ENCODE measurements at regions of chr4 and their contacts with region 1.

Region 1: GRCh38 chr4:122716825-122717448 is 15.6 kb upstream of the BBS12 start:
- DNase-seq: peak; percentile 59
- H3K4me3 Mint-ChIP-seq: no peak overlapping the region
- H3K27ac Mint-ChIP-seq: peak overlapping the region; percentile 40
- H3K4me1 Mint-ChIP-seq: peaks cover 46% of the 10 kb centered on the region
- H3K27me3 Mint-ChIP-seq: no peaks in the 10 kb centered on the region

Region 2: DNA sequence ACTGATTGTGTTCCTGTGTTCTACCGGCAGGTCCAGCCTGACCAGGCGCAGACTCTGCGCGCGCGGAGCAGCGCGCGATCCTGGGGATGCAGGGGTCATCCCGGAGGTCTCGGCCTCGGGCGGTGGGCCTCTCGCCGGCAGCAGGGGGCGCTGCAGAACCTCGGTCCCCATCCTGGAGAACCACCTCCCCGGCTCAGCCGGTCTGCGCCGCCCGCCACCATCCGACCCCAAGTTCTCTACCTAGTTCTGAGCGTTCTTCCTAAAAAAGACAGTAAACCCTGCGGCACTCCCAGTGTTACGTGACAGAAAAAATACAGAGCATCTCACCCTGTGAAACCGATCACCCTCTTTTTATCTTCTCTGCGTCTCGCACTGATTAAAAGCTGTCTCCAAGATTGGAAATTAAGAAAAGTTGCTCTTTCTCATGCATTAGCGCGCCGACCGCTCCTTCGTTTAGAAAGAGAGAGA is 766.7 kb before region 1 on chr4:
- intact Hi-C with region 1: loop called (anchors 10 kb)
- DNase-seq: peak; percentile 71
- H3K4me3 Mint-ChIP-seq: peak overlapping the region; percentile 82
- H3K27ac Mint-ChIP-seq: no peak overlapping the region
- H3K4me1 Mint-ChIP-seq: peaks cover 14% of the 10 kb centered on the region
- H3K27me3 Mint-ChIP-seq: peaks cover 63% of the 10 kb centered on the region

Region 3: GRCh38 chr4:122584519-122584918 is 132.4 kb before region 1 on chr4:
- intact Hi-C with region 1: loop called (anchors 1 kb)
- DNase-seq: no peak
- H3K4me3 Mint-ChIP-seq: peak overlapping the region; percentile 40
- H3K27ac Mint-ChIP-seq: peak overlapping the region; percentile 84
- H3K4me1 Mint-ChIP-seq: peaks cover 32% of the 10 kb centered on the region
- H3K27me3 Mint-ChIP-seq: no peaks in the 10 kb centered on the region

Region 4: DNA sequence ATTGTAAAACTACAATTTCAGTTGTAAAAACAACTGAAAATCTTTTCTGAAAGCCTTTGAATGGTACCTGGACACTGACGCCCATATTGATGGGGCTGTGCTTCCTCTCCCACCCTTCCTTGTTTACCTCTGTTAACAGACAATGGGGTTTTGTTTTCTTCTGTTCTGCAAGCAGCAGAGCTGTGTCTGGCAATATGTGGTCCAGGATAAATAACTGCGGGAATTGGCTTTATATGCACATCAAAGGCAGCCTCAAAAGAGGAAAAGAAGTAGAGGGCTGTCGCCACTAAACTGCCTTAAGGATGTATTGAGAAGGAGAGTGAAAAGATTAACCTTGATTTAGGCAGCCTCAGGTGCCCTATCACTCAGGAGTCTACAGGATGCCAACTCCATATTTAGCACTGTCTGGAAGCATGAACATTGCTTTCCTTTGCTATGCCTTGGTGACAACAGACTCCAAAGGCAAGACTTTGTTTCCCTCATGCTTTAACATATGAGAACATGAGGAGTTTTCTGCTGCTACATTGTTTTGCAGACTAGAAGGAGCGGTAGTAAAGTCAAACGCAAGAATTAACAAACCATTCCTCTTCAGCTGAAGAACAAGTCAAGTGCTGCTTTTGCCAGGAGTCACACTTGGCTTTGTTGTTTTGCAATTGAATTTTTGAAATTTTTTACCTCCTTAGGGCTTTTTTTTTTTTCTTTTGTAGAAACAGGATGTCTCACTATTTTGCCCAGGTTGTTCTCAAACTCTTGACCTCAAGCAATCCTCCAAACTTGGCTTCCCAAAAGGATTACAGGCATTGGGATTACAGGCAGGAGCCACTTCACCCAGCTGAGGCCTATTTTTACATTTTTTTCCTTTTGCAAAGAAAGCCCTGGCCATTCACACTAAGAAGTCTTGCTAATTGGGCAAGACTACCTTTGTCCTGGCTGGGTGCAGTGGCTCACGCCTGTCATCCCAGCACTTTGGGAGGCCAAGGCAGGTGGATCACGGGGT is 99.0 kb before region 1 on chr4:
- intact Hi-C with region 1: loop called (anchors 5 kb)
- DNase-seq: no peak
- H3K4me3 Mint-ChIP-seq: peak overlapping the region; percentile 35
- H3K27ac Mint-ChIP-seq: peak overlapping the region; percentile 52
- H3K4me1 Mint-ChIP-seq: peaks cover 44% of the 10 kb centered on the region
- H3K27me3 Mint-ChIP-seq: no peaks in the 10 kb centered on the region

Region 5: GRCh38 chr4:122764821-122765215 is 47.9 kb after region 1 on chr4:
- intact Hi-C with region 1: no loop called
- DNase-seq: no peak
- H3K4me3 Mint-ChIP-seq: no peak overlapping the region
- H3K27ac Mint-ChIP-seq: peak overlapping the region; percentile 56
- H3K4me1 Mint-ChIP-seq: peaks cover 22% of the 10 kb centered on the region
- H3K27me3 Mint-ChIP-seq: no peaks in the 10 kb centered on the region

Region 6: GRCh38 chr4:122879001-122879400 is 162.1 kb after region 1 on chr4:
- intact Hi-C with region 1: no loop called
- DNase-seq: no peak
- H3K4me3 Mint-ChIP-seq: no peak overlapping the region
- H3K27ac Mint-ChIP-seq: no peak overlapping the region
- H3K4me1 Mint-ChIP-seq: no peaks in the 10 kb centered on the region
- H3K27me3 Mint-ChIP-seq: peaks cover 7% of the 10 kb centered on the region

Measured in activated T-helper 2 cell treated with anti-CD3 and anti-CD28 coated beads, Interferon-gamma antibody, Interleukin-2, Interleukin-4, amounts not matched to agents 10 μg/mL and 5 μg/mL and 100 μg/mL, durations not matched to agents 14 hours and 24 hours and 36 hours (primary cell).